ENCODE measurements at regions of chr16 and their contacts with region 1.

Region 1: GRCh38 chr16:1705688-1706385 is at the start of gene MAPK8IP3:
- DNase-seq: peak; percentile 96
- ATAC-seq: peak; percentile 80
- H3K4me3 Mint-ChIP-seq: peak within 1 kb of the TSS; percentile 92
- H3K27ac Mint-ChIP-seq: peak within 1 kb of the TSS; percentile 90
- H3K4me1 Mint-ChIP-seq: peaks cover 32% of the 10 kb centered on the region
- H3K27me3 Mint-ChIP-seq: no peaks in the 10 kb centered on the region
- total RNA-seq, gene MAPK8IP3: 56.7 to 57.6 TPM

Region 2: GRCh38 chr16:1474796-1475551 is 230.9 kb before region 1 on chr16 and contains the start of gene CLCN7:
- CTCF ChIA-PET with region 1: no interaction called
- POLR2A ChIA-PET with region 1: no interaction called
- intact Hi-C with region 1: loop called in 1 of 2 experiments (anchors 1 kb)
- DNase-seq: peak; percentile 95
- ATAC-seq: peak; percentile 91
- H3K4me3 Mint-ChIP-seq: peak within 1 kb of the TSS; percentile 73
- H3K27ac Mint-ChIP-seq: peak within 1 kb of the TSS; percentile 81
- H3K4me1 Mint-ChIP-seq: peaks cover 22% of the 10 kb centered on the region
- H3K27me3 Mint-ChIP-seq: no peaks in the 10 kb centered on the region
- total RNA-seq, gene CLCN7: 29.9 to 33.7 TPM

Region 3: GRCh38 chr16:1533443-1533951 is 172.3 kb before region 1 on chr16 and contains the start of gene TMEM204:
- CTCF ChIA-PET with region 1: no interaction called
- POLR2A ChIA-PET with region 1: no interaction called
- intact Hi-C with region 1: loop called in 1 of 2 experiments (anchors 5 kb)
- DNase-seq: peak; percentile 66
- ATAC-seq: peak; percentile 25
- H3K4me3 Mint-ChIP-seq: peak within 1 kb of the TSS; percentile 95
- H3K27ac Mint-ChIP-seq: peak within 1 kb of the TSS; percentile 94
- H3K4me1 Mint-ChIP-seq: peaks cover 39% of the 10 kb centered on the region
- H3K27me3 Mint-ChIP-seq: no peaks in the 10 kb centered on the region
- total RNA-seq, gene TMEM204: 12.6 to 17.5 TPM

Region 4: GRCh38 chr16:1543085-1543896 is 162.5 kb before region 1 on chr16:
- CTCF ChIA-PET with region 1: no interaction called
- POLR2A ChIA-PET with region 1: no interaction called
- intact Hi-C with region 1: loop called in 1 of 2 experiments (anchors 2 kb)
- DNase-seq: peak; percentile 84
- ATAC-seq: peak; percentile 85
- H3K4me3 Mint-ChIP-seq: peak overlapping the region; percentile 71
- H3K27ac Mint-ChIP-seq: peak overlapping the region; percentile 99
- H3K4me1 Mint-ChIP-seq: peaks cover 78% of the 10 kb centered on the region
- H3K27me3 Mint-ChIP-seq: no peaks in the 10 kb centered on the region

Region 5: GRCh38 chr16:1782352-1783091 is 76.7 kb after region 1 on chr16 and contains the starts of genes NUBP2 and SPSB3:
- CTCF ChIA-PET with region 1: interaction called, 16 read pairs
- POLR2A ChIA-PET with region 1: interaction called, 5 read pairs
- intact Hi-C with region 1: loop called in 1 of 2 experiments (anchors 1 kb)
- DNase-seq: peak; percentile 99
- ATAC-seq: peak; percentile 93
- H3K4me3 Mint-ChIP-seq: peak within 1 kb of the TSS; percentile 94
- H3K27ac Mint-ChIP-seq: peak within 1 kb of the TSS; percentile 85
- H3K4me1 Mint-ChIP-seq: peaks cover 26% of the 10 kb centered on the region
- H3K27me3 Mint-ChIP-seq: no peaks in the 10 kb centered on the region
- total RNA-seq, gene NUBP2: 34.4 to 42.4 TPM
- total RNA-seq, gene SPSB3: 12.5 to 13.6 TPM

Region 6: DNA sequence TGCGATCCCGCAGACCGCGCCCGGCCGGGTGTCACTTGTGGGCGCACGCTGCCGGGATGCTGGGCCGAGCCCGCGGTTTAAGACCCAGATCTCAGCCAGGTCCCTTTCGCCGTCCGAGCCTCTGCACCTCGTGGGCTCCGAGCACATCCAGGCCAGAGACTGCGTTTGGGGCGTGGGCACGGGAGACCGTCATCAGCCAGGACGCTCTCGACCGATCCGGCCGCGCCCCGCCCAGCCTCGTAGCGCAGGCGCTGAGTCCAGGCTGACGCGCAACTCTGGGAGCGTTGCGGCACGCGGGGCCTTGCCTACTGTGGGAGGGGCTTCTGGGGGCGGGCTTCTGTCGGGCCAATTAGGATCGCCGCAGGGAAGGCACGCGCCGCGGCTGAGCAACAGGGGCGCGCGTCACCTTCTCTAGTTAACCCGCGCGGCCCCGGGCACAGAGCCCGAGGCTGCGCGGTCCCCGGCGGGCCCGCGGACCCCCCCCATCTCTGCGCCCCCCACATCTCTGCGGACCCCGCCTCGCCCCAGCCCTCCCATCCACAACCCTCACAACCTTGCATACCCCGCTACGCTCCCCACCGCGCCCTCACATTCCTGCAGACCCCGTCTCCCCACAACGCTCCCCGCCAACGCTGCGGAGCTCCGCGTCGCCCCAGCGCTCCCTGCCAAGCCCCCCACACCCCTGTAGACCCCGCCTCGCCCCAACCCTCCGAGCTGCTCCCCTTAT is 826.1 kb after region 1 on chr16:
- CTCF ChIA-PET with region 1: no interaction called
- POLR2A ChIA-PET with region 1: no interaction called
- intact Hi-C with region 1: loop called in 1 of 2 experiments (anchors 5 kb)
- DNase-seq: peak; percentile 99
- ATAC-seq: peak; percentile 94
- H3K4me3 Mint-ChIP-seq: peak overlapping the region; percentile 82
- H3K27ac Mint-ChIP-seq: peak overlapping the region; percentile 97
- H3K4me1 Mint-ChIP-seq: peaks cover 17% of the 10 kb centered on the region
- H3K27me3 Mint-ChIP-seq: no peaks in the 10 kb centered on the region